ENCODE measurements at regions of chr1 and their contacts with region 1.

Region 1: DNA sequence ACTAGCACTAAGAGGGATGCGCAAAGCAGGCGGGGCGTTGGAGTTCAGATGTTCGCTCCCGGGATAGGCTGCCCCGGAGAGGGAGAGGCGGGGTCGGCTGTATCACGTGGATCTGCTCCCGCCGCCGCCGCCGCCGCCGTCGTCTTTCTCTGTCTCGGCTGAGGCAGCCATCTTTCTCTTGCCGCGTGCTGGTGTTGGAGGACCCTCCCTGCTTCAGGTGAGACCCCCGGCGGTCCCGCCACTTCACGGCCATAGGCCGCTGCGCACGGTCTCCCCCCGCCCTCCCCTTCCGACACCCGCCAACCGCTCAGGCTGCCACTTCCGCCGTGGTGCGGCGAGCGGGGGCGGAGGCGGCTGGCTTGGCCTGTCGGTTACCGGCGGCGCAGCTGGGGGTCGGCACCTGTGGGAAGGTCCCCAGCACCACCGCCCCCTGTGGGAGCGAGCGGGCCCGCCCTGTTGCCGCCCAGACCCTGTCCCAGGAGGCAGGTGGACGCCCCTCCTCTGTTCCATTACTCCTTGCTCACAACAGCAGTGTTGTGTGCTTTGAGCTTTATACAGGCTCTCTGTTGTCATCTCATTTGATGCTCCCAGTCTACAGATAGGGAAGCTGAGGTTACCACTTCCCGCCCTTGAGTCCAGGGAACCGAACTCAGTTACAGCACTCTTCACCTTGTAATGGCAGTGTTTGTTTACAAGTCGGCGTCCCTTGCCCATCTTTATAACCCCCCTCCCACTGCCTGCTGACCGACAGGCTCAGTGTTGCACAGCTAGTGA is at the start of gene BTF3L4:
- DNase-seq: peak; percentile 93
- ATAC-seq: peak; percentile 91
- H3K4me3 ChIP-seq: peak within 1 kb of the TSS; percentile 93
- H3K27ac ChIP-seq: peak within 1 kb of the TSS; percentile 60
- H3K4me1 ChIP-seq: peaks cover 33% of the 10 kb centered on the region
- H3K27me3 ChIP-seq: no peaks in the 10 kb centered on the region
- CTCF ChIP-seq: no peak
- total RNA-seq, gene BTF3L4: 33.8 and 50.4 TPM in 2 replicates

Region 2: GRCh38 chr1:52033190-52034049 is 22.9 kb before region 1 on chr1 and contains the start of gene KTI12:
- CTCF ChIA-PET with region 1: no interaction called
- POLR2A ChIA-PET with region 1: interaction called, 6 read pairs
- intact Hi-C with region 1: loop called (anchors 1 kb)
- DNase-seq: peak; percentile 86
- ATAC-seq: peak; percentile 84
- H3K4me3 ChIP-seq: peak within 1 kb of the TSS; percentile 97
- H3K27ac ChIP-seq: peak within 1 kb of the TSS; percentile 59
- H3K4me1 ChIP-seq: peaks cover 15% of the 10 kb centered on the region
- H3K27me3 ChIP-seq: no peaks in the 10 kb centered on the region
- CTCF ChIP-seq: no peak
- total RNA-seq, gene KTI12: 9.7 and 12.8 TPM in 2 replicates